IMR-90 (cell line): ENCODE measurements at regions of chr12 and their contacts with region 1.

Region 1: DNA sequence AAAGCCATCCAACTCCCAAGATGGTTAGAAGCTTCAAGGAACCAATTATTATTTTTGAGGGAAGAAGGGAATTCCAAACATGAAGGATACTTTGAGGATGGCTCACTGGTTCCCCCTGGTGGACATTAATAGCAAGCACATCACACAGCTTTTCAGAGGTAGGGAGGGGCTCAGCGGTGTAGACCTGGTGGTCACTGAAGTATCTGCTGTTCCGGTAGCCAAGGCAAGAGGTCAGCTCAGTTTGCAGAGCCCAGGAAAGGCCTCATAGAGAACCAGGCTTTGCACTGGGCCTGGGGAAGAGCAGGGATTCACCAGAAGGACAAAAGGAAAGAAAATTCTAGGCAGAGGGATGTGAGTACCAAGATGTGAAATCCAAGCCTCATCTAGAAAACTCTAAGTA is 118.7 kb downstream of the KSR2 start:
- DNase-seq: peak; percentile 28
- ATAC-seq: peak; percentile 88
- H3K4me3 ChIP-seq: no peak overlapping the region
- H3K27ac ChIP-seq: no peak overlapping the region
- H3K4me1 ChIP-seq: no peaks in the 10 kb centered on the region
- H3K27me3 ChIP-seq: no peaks in the 10 kb centered on the region
- CTCF ChIP-seq: peak; percentile 70
- POLR2A ChIP-seq: no peak
- RAD21 ChIP-seq: peak; percentile 43

Region 2: GRCh38 chr12:117212563-117213190 is 637.4 kb before region 1 on chr12:
- CTCF ChIA-PET with region 1: no interaction called
- POLR2A ChIA-PET with region 1: no interaction called
- dilution Hi-C with region 1: no loop called
- in situ Hi-C with region 1: no loop called
- intact Hi-C with region 1: loop called (anchors 1 kb)
- DNase-seq: peak; percentile 71
- ATAC-seq: peak; percentile 97
- H3K4me3 ChIP-seq: no peak overlapping the region
- H3K27ac ChIP-seq: no peak overlapping the region
- H3K4me1 ChIP-seq: no peaks in the 10 kb centered on the region
- H3K27me3 ChIP-seq: peaks cover 7% of the 10 kb centered on the region; the same call in 1 of the 2 replicates
- CTCF ChIP-seq: peak; percentile 92
- POLR2A ChIP-seq: no peak
- RAD21 ChIP-seq: peak; percentile 79

Region 3: DNA sequence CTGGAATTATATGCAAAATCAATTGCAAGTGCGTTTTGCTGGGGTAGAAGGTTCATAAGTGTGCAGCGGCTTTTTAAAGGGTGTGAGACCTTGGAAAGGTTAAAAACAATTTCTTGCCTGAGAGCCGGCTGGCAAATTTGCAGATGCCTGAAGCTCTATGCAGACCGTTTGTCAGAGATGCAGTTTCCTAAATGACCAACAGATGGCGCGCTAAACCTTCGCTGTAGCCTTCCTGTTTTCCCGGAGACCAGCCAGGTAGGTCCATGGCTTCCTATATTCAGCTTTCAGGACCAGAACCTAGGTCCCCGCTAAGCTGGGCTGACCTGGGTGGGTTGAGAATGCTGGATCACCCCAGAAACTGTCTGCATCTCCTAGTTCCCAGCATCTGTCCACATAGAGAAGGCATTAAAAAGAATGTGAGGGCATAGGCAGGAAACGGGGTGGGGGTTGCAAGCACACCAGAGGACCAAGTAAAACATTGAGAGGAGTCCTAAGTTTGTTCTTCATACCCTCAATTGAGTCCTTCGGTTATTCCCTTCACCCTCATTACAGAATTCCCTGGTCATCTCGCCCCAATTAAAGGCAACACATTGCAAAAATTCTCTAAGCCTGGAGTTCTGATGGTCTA is 482.9 kb before region 1 on chr12:
- CTCF ChIA-PET with region 1: interaction called, 5 read pairs
- POLR2A ChIA-PET with region 1: no interaction called
- dilution Hi-C with region 1: no loop called
- in situ Hi-C with region 1: no loop called
- intact Hi-C with region 1: loop called (anchors 5 kb)
- DNase-seq: peak; percentile 53
- ATAC-seq: peak; percentile 72
- H3K4me3 ChIP-seq: no peak overlapping the region
- H3K27ac ChIP-seq: no peak overlapping the region
- H3K4me1 ChIP-seq: no peaks in the 10 kb centered on the region
- H3K27me3 ChIP-seq: no peaks in the 10 kb centered on the region
- CTCF ChIP-seq: peak; percentile 69
- POLR2A ChIP-seq: no peak
- RAD21 ChIP-seq: peak; percentile 69